Right ventricle myocardium superior (tissue), 1 donor: ENCODE measurements at regions of chr7 and their contacts with region 1.

Region 1: GRCh38 chr7:116271963-116272839 is 61.9 kb downstream of the TES start:
- DNase-seq: no peak
- ATAC-seq: peak; percentile 90

Region 2: GRCh38 chr7:116045532-116045931 is 226.7 kb before region 1 on chr7:
- intact Hi-C with region 1: no loop called
- DNase-seq: no peak
- ATAC-seq: no peak

Region 3: GRCh38 chr7:116331020-116331419 is 58.8 kb after region 1 on chr7:
- intact Hi-C with region 1: loop called (anchors 5 kb)
- DNase-seq: no peak
- ATAC-seq: peak; percentile 36

Region 4: GRCh38 chr7:116395125-116395791 is 123.1 kb after region 1 on chr7:
- intact Hi-C with region 1: no loop called
- DNase-seq: no peak
- ATAC-seq: no peak

Region 5: GRCh38 chr7:116443101-116443523 is 170.9 kb after region 1 on chr7:
- intact Hi-C with region 1: loop called (anchors 10 kb)
- DNase-seq: no peak
- ATAC-seq: no peak

Region 6: GRCh38 chr7:116525913-116526861 is 254.0 kb after region 1 on chr7:
- intact Hi-C with region 1: loop called (anchors 5 kb)
- DNase-seq: peak; percentile 88
- ATAC-seq: peak; percentile 86